ENCODE measurements at regions of chr10 and their contacts with region 1.

Region 1: DNA sequence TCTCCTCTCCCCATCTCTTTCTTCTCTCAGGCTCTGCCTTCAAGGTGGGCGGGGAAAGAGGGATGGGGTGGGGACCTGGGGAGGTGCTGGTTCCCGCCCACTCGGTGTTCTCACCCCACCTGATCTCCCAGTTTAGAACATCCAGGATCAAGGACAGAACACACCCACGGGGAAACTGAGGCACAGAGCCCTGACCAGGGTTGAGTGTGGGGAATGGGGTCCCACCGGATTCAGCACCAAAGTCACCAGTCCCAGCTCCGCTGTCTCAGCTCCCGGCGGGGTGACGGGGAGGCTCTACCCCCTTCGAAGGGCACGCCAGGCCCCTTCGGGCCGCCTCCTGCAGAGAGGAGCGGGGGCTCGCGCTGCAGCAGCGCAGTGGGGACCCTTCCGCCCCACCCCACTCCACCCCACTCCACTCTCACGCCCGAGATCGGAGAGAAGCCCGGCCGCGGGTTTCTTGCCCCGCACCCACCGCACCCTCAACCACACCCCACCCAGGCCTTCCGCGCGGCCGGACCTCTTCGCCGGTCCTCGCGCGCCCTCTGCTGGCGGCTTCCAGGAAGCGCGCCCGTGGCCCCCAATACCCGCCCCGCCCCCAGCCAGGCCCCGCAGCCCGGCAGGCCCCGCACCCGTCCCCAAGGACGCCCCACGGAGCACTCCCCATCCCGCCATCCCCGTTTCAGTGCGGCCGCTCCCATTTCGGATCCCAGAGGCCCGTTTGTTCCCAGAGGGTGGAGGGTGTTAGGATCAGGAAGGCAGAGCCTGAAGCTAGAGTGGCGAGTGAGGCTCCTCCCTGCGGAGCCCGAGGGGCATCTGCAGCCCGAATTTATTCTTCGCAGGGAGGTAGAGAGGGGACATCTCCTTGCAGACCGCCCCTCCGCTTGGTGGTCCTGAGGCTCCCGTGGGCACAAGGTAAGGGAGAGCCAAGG is 18.0 kb downstream of the POLL start:
- DNase-seq: peak; percentile 82
- H3K4me3 ChIP-seq: peak overlapping the region; percentile 55
- H3K27ac ChIP-seq: no peak overlapping the region
- H3K4me1 ChIP-seq: peaks cover 10% of the 10 kb centered on the region
- H3K27me3 ChIP-seq: peaks cover 36% of the 10 kb centered on the region
- CTCF ChIP-seq: peak; percentile 88

Region 2: GRCh38 chr10:101272229-101272868 is 297.8 kb before region 1 on chr10:
- intact Hi-C with region 1: loop called (anchors 5 kb)
- DNase-seq: peak; percentile 60
- H3K4me3 ChIP-seq: no peak overlapping the region
- H3K27ac ChIP-seq: no peak overlapping the region
- H3K4me1 ChIP-seq: no peaks in the 10 kb centered on the region
- H3K27me3 ChIP-seq: peaks cover 3% of the 10 kb centered on the region
- CTCF ChIP-seq: peak; percentile 60

Region 3: GRCh38 chr10:101903827-101904550 is 333.9 kb after region 1 on chr10:
- intact Hi-C with region 1: no loop called
- DNase-seq: peak; percentile 19
- H3K4me3 ChIP-seq: no peak overlapping the region
- H3K27ac ChIP-seq: no peak overlapping the region
- H3K4me1 ChIP-seq: no peaks in the 10 kb centered on the region
- H3K27me3 ChIP-seq: no peaks in the 10 kb centered on the region
- CTCF ChIP-seq: no peak

Region 4: DNA sequence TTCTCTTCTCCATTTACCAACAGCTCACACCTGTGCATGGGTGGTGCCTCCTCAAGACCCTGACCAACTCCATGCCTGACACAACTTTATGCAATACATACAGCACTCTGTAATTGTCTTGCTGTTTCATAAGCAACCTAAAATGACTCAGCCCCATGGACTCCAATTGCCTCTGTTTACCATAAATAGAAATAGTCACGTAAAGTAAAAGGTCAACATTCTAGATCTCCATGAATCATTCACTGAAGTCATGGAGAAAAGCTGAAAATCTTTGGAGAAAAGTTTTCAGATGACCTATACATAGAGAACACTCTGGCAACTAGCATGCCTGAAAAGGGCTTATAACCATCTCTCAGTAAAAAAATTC is 369.2 kb after region 1 on chr10:
- intact Hi-C with region 1: no loop called
- DNase-seq: no peak
- H3K4me3 ChIP-seq: no peak overlapping the region
- H3K27ac ChIP-seq: no peak overlapping the region
- H3K4me1 ChIP-seq: no peaks in the 10 kb centered on the region
- H3K27me3 ChIP-seq: no peaks in the 10 kb centered on the region
- CTCF ChIP-seq: no peak